ENCODE measurements at regions of chr14 and their contacts with region 1.

Region 1: DNA sequence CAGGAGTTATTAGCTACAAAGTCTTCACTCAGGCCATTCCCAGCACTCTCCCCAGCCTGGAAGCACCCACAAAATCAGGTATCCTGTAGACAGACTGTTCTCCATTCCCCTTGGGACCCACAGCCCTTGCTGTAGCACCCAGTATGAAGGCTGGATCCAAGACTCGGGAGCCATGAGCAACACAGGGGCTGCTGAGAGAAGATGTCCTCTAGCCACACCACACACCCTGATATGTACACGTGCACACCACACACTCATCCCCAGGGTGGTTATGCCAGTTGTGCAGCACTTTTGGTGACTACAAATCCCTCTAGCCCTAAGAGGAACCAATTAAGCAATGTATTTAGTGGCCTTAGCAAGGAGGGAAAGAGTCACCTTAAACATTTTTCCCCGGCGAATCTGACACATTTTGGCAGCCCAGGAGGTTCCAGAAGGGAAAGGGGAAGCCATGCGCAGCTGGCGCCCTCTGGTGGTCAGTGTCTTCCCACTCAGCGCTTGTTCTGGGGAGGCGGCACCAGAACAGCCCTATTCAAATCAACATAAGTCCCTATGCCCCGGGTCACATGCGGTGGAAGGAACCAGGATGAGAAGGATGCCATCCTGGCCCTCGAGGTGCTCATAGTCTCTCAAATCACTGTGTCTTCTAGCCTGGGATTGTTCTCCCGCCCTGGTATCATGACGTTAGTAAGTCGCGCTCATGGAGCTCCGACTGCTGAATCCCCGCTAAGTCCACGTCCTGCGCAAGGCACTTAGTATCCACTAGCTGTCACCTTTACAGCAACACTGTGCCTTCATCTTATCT is 96.9 kb downstream of the GCH1 start:
- DNase-seq: peak; percentile 55 to 64 (median 62)
- H3K4me3 ChIP-seq: no peak overlapping the region
- H3K4me3 Mint-ChIP-seq: peak overlapping the region in 2 of 8 donors; percentile 9 to 24
- H3K27ac ChIP-seq: no peak overlapping the region
- H3K27ac Mint-ChIP-seq: peak overlapping the region in 1 of 7 donors; percentile 4
- H3K4me1 ChIP-seq: no peaks in the 10 kb centered on the region
- H3K4me1 Mint-ChIP-seq: peaks cover 1 to 7% (median 5%) of the 10 kb centered on the region in 4 donors
- H3K27me3 ChIP-seq: no peaks in the 10 kb centered on the region
- H3K27me3 Mint-ChIP-seq: peaks cover 4 to 10% of the 10 kb centered on the region in 2 donors

Region 2: GRCh38 chr14:54792288-54792687 is 13.4 kb before region 1 on chr14:
- CTCF ChIA-PET with region 1: interaction called, 31 read pairs
- POLR2A ChIA-PET with region 1: no interaction called
- intact Hi-C with region 1: no loop called
- DNase-seq: no peak
- H3K4me3 ChIP-seq: no peak overlapping the region
- H3K4me3 Mint-ChIP-seq: no peak overlapping the region
- H3K27ac ChIP-seq: no peak overlapping the region
- H3K27ac Mint-ChIP-seq: no peak overlapping the region
- H3K4me1 ChIP-seq: no peaks in the 10 kb centered on the region
- H3K4me1 Mint-ChIP-seq: no peaks in the 10 kb centered on the region
- H3K27me3 ChIP-seq: no peaks in the 10 kb centered on the region
- H3K27me3 Mint-ChIP-seq: peaks cover 0 to 3% of the 10 kb centered on the region in 2 donors

Region 3: DNA sequence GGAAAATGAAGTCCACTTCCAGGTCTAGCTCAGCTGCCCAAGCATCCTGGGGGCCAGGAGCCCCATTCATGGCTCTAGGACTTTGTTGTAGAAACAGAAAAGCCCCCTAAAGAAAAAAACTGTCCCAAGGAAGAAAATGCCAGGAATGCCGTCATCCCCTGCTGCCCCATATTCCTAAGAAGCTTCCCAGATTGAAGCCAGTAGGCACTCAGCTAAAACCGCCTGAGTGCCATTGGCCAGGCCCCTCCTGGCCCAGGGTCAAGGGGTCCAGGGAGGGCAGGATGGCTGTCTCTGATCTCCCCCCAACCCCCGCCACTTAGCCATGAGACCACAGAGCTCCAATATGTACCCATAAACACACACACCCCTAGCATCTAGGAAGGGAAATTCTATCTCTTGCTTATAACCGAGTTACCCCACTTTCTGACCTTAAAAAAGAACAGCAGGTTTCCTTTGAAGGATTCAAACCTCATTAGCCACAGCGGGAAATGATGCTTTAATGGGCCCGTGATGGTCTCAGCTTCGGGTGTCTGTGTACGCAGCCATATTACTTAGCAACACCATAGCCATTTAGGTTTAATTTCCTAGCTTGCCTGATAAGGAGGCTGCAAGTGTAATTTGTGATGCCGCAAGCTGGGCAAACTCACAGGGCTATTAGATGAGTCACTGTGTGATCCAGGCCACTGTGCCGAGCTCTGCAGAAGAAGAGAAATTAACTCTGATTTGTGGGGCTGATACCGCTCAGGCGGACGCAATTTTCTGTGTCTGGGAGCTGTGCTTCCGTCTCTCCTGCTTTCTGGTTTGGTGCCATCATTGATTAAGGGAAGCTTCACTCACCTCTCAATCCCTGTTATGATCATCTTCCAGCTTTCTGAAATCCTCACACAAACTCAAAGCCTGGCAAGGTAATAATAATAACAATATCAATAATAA is 12.7 kb after region 1 on chr14:
- CTCF ChIA-PET with region 1: interaction called, 35 read pairs
- POLR2A ChIA-PET with region 1: no interaction called
- intact Hi-C with region 1: no loop called
- DNase-seq: no peak
- H3K4me3 ChIP-seq: no peak overlapping the region
- H3K4me3 Mint-ChIP-seq: no peak overlapping the region
- H3K27ac ChIP-seq: no peak overlapping the region
- H3K27ac Mint-ChIP-seq: no peak overlapping the region
- H3K4me1 ChIP-seq: no peaks in the 10 kb centered on the region
- H3K4me1 Mint-ChIP-seq: no peaks in the 10 kb centered on the region
- H3K27me3 ChIP-seq: no peaks in the 10 kb centered on the region
- H3K27me3 Mint-ChIP-seq: peaks cover 4 to 11% of the 10 kb centered on the region in 2 donors

Region 4: DNA sequence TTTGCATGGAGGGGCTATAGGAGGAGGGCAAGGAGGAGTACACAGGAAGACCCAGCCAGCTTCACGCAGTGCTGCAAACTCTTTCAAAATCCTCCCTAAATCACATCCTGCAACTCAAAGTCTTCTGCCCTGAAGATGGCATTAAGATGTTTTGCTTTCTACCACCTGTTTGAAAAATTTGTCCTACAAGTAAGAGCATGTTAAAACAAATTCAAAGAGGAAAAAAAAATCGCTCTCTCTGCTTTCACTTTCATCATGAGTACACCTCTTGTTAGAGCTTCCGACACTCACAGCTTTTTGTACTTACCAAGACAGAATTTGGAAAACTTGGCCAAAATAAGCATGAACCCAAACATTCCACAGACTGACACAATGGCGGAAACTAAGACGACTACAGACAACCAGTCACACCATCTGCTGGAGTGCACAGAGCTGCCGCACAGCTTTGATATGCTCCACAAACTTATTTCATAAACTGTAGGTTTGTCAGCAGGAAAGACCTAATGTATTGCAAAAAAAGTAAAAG is 75.6 kb after region 1 on chr14:
- CTCF ChIA-PET with region 1: interaction called, 6 read pairs
- POLR2A ChIA-PET with region 1: no interaction called
- intact Hi-C with region 1: loop called (anchors 1 kb)
- DNase-seq: peak; percentile 46 to 65 (median 54)
- H3K4me3 ChIP-seq: peak overlapping the region; percentile 32 to 77
- H3K4me3 Mint-ChIP-seq: peak overlapping the region; percentile 82 to 95 (median 92)
- H3K27ac ChIP-seq: peak overlapping the region; percentile 59
- H3K27ac Mint-ChIP-seq: peak overlapping the region; percentile 80 to 98 (median 96)
- H3K4me1 ChIP-seq: peaks cover 45% of the 10 kb centered on the region
- H3K4me1 Mint-ChIP-seq: peaks cover 41 to 68% (median 47%) of the 10 kb centered on the region in 4 donors
- H3K27me3 ChIP-seq: no peaks in the 10 kb centered on the region
- H3K27me3 Mint-ChIP-seq: no peaks in the 10 kb centered on the region

Region 5: DNA sequence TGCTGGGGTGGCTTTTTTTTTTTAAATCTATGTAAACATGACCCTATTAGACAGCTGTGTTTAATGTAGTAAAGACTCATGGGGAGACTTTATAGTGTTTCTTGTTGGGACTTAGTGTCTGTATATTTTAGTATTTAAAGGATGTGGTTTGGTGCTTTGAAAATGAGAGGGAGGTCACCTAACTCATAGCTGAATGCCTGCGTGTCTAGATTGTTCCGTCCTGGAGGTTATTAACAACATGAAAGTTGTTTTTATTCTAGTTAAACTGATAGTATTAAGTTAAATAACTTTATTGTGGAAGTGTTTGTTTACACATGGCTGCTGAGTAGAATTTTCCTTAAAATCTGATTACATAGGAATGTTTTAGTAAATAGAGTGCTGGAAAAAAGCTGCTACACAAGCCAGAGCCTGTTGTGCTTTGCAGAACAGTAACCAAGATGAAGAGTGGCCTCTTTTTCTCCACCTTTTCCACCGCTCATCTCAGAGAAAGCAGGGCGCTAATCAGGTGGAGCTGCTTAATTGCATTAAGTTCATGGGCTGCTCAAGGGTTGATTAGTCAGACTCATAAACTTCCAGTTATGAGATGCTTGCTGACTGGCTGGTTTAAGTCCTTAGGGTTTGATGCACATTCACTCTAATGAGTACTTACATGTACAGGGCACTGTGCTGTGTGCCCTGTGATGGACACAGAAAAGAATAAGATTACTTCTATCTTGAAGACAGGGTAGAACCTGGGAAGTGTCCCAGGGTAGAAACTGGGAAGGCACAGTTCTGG is 528.2 kb after region 1 on chr14:
- CTCF ChIA-PET with region 1: no interaction called
- POLR2A ChIA-PET with region 1: no interaction called
- intact Hi-C with region 1: no loop called
- DNase-seq: peak in 4 of 5 donors; percentile 37 to 56 (median 40)
- H3K4me3 ChIP-seq: peak overlapping the region; percentile 11 to 37
- H3K4me3 Mint-ChIP-seq: peak overlapping the region; percentile 81 to 93 (median 89)
- H3K27ac ChIP-seq: peak overlapping the region; percentile 67
- H3K27ac Mint-ChIP-seq: peak overlapping the region; percentile 86 to 97 (median 94)
- H3K4me1 ChIP-seq: peaks cover 84% of the 10 kb centered on the region
- H3K4me1 Mint-ChIP-seq: peaks cover 60 to 90% (median 74%) of the 10 kb centered on the region in 4 donors
- H3K27me3 ChIP-seq: no peaks in the 10 kb centered on the region
- H3K27me3 Mint-ChIP-seq: no peaks in the 10 kb centered on the region